CD8-positive, alpha-beta memory T cell (primary cell): ENCODE measurements at regions of chr9 and their contacts with region 1.

Region 1: GRCh38 chr9:132768932-132769905 is 99.0 kb downstream of the GTF3C4 start:
- DNase-seq: peak; percentile 39 to 79 (median 51)
- H3K4me3 ChIP-seq: peak overlapping the region; percentile 89
- H3K4me3 Mint-ChIP-seq: peak overlapping the region; percentile 99 to 100 (median 100)
- H3K27ac ChIP-seq: peak overlapping the region; percentile 75
- H3K27ac Mint-ChIP-seq: peak overlapping the region; percentile 91 to 99 (median 98)
- H3K4me1 ChIP-seq: peaks cover 19% of the 10 kb centered on the region
- H3K4me1 Mint-ChIP-seq: peaks cover 26 to 31% (median 26%) of the 10 kb centered on the region in 3 donors
- H3K27me3 ChIP-seq: no peaks in the 10 kb centered on the region
- H3K27me3 Mint-ChIP-seq: peaks cover 0 to 1% of the 10 kb centered on the region in 2 donors

Region 2: GRCh38 chr9:132656299-132656698 is 112.9 kb before region 1 on chr9:
- CTCF ChIA-PET with region 1: no interaction called
- POLR2A ChIA-PET with region 1: no interaction called
- DNase-seq: no peak
- H3K4me3 ChIP-seq: no peak overlapping the region
- H3K4me3 Mint-ChIP-seq: no peak overlapping the region
- H3K27ac ChIP-seq: no peak overlapping the region
- H3K27ac Mint-ChIP-seq: no peak overlapping the region
- H3K4me1 ChIP-seq: no peaks in the 10 kb centered on the region
- H3K4me1 Mint-ChIP-seq: peaks cover 3 to 13% (median 4%) of the 10 kb centered on the region in 3 donors
- H3K27me3 ChIP-seq: no peaks in the 10 kb centered on the region
- H3K27me3 Mint-ChIP-seq: no peaks in the 10 kb centered on the region

Region 3: GRCh38 chr9:132669698-132670456 is 99.3 kb before region 1 on chr9 and contains the start of gene DDX31:
- CTCF ChIA-PET with region 1: no interaction called
- POLR2A ChIA-PET with region 1: interaction called, 14 read pairs
- DNase-seq: peak; percentile 81 to 91 (median 85)
- H3K4me3 ChIP-seq: peak within 1 kb of the TSS; percentile 99
- H3K4me3 Mint-ChIP-seq: peak within 1 kb of the TSS; percentile 88 to 98 (median 92)
- H3K27ac ChIP-seq: peak within 1 kb of the TSS; percentile 99
- H3K27ac Mint-ChIP-seq: peak within 1 kb of the TSS; percentile 94 to 99 (median 96)
- H3K4me1 ChIP-seq: peaks cover 24% of the 10 kb centered on the region
- H3K4me1 Mint-ChIP-seq: peaks cover 49 to 67% (median 67%) of the 10 kb centered on the region in 3 donors
- H3K27me3 ChIP-seq: no peaks in the 10 kb centered on the region
- H3K27me3 Mint-ChIP-seq: peaks cover 0 to 2% of the 10 kb centered on the region in 2 donors
- total RNA-seq, gene DDX31: 28.6 to 31.3 TPM

Region 4: DNA sequence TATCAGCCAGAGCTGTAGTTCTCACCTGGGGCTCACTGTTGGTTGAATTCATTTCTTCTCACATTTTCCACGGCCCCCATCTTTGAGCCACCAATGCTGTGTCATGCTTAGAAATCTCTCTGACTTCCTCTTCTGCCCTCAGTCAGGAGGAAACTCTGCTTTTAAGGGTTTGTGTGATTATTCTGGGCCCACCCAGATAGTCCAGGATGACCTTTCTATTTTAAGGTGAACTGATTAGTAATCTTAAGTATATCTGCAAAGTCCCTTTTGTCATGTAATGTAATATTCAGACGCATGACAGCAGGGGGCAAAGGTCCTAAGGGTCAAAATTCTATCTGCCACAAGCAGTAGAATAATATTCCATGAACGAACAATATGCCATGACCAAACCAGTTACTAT is 20.5 kb after region 1 on chr9:
- CTCF ChIA-PET with region 1: no interaction called
- POLR2A ChIA-PET with region 1: no interaction called
- DNase-seq: no peak
- H3K4me3 ChIP-seq: no peak overlapping the region
- H3K4me3 Mint-ChIP-seq: no peak overlapping the region
- H3K27ac ChIP-seq: no peak overlapping the region
- H3K27ac Mint-ChIP-seq: no peak overlapping the region
- H3K4me1 ChIP-seq: no peaks in the 10 kb centered on the region
- H3K4me1 Mint-ChIP-seq: no peaks in the 10 kb centered on the region
- H3K27me3 ChIP-seq: peaks cover 5% of the 10 kb centered on the region
- H3K27me3 Mint-ChIP-seq: peaks cover 16 to 46% of the 10 kb centered on the region in 2 donors